Posterior vena cava (tissue), 2 donors: ENCODE measurements at regions of chr10 and their contacts with region 1.

Region 1: DNA sequence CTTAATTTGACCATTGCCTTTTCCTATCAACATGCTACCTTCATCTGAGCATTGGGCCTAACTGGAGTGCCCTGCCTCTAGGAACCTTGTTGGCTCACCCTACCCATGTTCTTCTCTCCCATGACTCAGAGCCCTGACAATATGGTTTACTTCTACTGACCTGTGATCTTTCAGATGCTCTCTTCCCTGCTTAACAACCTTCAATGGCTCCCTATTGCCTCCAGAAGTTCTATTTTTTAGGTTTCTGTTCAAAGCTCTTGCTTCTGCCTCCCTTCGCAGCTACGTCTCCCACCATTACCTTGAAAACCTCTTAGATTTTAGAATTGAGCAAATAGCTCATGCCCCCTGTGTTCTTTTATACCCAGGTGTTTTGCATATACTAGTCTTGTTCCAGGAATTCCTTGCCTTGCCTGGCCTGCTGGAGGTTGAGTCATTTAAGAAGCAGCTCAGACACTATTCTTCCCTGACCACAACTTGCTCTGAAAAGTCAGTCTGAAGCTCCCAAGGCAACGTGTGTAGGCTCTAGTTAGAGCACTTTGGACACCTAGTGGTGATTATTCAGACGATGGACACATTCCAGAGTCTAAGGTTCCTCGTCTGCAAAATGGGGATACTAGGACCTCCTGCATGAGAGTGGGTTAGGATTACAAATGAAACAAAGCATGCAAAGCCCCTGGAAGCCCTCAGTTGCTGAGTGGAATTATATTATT is 64.4 kb upstream of the EMX2 start:
- DNase-seq: no peak

Region 2: DNA sequence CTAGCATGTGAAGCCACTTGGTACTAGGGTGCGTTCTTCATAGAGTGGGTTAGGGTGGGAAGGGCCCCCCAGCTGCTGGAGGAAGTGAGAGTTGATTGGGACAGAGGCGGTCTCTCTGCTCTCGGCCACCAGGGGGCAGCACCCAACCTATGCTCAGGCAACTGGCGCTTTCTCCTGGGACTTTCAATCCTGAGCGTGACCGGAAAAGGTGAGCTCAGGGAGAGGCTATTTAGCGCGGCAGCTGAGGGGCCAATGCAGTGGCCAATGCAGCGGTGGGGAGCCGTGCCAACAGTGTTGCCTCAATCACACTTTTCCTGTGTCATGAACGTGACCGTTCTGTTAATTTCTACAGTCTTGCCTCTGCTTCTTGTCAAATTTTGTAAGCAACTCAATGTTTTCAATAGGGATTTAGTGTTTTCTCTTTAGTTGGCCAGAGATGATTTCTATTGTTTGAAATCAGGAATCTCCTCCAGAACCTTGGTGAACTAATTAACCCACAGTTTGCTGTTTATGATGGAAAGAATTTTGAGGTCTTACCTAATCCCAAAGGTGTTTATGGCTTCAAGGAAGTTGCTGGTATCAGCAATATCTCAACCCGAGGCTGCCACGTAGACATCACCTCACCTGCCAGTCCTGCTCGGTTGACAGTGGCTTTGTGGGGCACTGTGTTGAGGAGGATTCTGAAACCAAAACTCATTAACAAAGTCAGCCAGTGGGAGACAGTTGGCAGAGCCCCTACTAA is 35.0 kb before region 1 on chr10:
- intact Hi-C with region 1: loop called in 1 of 2 experiments (anchors 5 kb)
- DNase-seq: peak; percentile 95